ENCODE measurements at regions of chr18 and their contacts with region 1.

Region 1: GRCh38 chr18:23623040-23623439 is 36.7 kb upstream of the NPC1 start:
- DNase-seq: no peak
- ATAC-seq: no peak
- H3K4me3 ChIP-seq: no peak overlapping the region
- H3K27ac ChIP-seq: no peak overlapping the region
- H3K4me1 ChIP-seq: peaks cover 24% of the 10 kb centered on the region
- H3K27me3 ChIP-seq: no peaks in the 10 kb centered on the region
- CTCF ChIP-seq: no peak

Region 2: GRCh38 chr18:23703057-23703986 is 80.3 kb after region 1 on chr18:
- intact Hi-C with region 1: loop called (anchors 5 kb)
- DNase-seq: no peak
- ATAC-seq: peak; percentile 88
- H3K4me3 ChIP-seq: no peak overlapping the region
- H3K27ac ChIP-seq: no peak overlapping the region
- H3K4me1 ChIP-seq: no peaks in the 10 kb centered on the region
- H3K27me3 ChIP-seq: no peaks in the 10 kb centered on the region
- CTCF ChIP-seq: peak; percentile 51

Region 3: GRCh38 chr18:24160086-24160485 is 537.0 kb after region 1 on chr18:
- intact Hi-C with region 1: no loop called
- DNase-seq: no peak
- ATAC-seq: no peak
- H3K4me3 ChIP-seq: no peak overlapping the region
- H3K27ac ChIP-seq: no peak overlapping the region
- H3K4me1 ChIP-seq: no peaks in the 10 kb centered on the region
- H3K27me3 ChIP-seq: no peaks in the 10 kb centered on the region
- CTCF ChIP-seq: no peak

Measured in upper lobe of right lung (tissue), 1 donor.